ENCODE measurements at regions of chr2 and their contacts with region 1.

Region 1: GRCh38 chr2:119366649-119367471 is at the starts of genes C2orf76 and DBI:
- DNase-seq: peak; percentile 98
- H3K4me3 Mint-ChIP-seq: peak within 1 kb of the TSS; percentile 98
- H3K27ac Mint-ChIP-seq: peak within 1 kb of the TSS; percentile 97
- H3K4me1 Mint-ChIP-seq: peaks cover 35% of the 10 kb centered on the region
- H3K27me3 Mint-ChIP-seq: no peaks in the 10 kb centered on the region
- total RNA-seq, gene C2orf76: 10.2 and 11.5 TPM in 2 replicates
- total RNA-seq, gene DBI: 139 and 145 TPM in 2 replicates

Region 2: GRCh38 chr2:118013724-118014491 is 1353.0 kb before region 1 on chr2 and contains the start of gene CCDC93:
- intact Hi-C with region 1: loop called (anchors 5 kb)
- DNase-seq: peak; percentile 97
- H3K4me3 Mint-ChIP-seq: peak within 1 kb of the TSS; percentile 96
- H3K27ac Mint-ChIP-seq: peak within 1 kb of the TSS; percentile 91
- H3K4me1 Mint-ChIP-seq: peaks cover 41% of the 10 kb centered on the region
- H3K27me3 Mint-ChIP-seq: no peaks in the 10 kb centered on the region
- total RNA-seq, gene CCDC93: 30.3 and 34.4 TPM in 2 replicates

Region 3: GRCh38 chr2:118186110-118186857 is 1180.6 kb before region 1 on chr2:
- intact Hi-C with region 1: loop called (anchors 2 kb)
- DNase-seq: peak; percentile 95
- H3K4me3 Mint-ChIP-seq: peak overlapping the region; percentile 89
- H3K27ac Mint-ChIP-seq: peak overlapping the region; percentile 96
- H3K4me1 Mint-ChIP-seq: peaks cover 25% of the 10 kb centered on the region
- H3K27me3 Mint-ChIP-seq: no peaks in the 10 kb centered on the region

Region 4: GRCh38 chr2:118791483-118791882 is 575.4 kb before region 1 on chr2:
- intact Hi-C with region 1: no loop called
- DNase-seq: no peak
- H3K4me3 Mint-ChIP-seq: no peak overlapping the region
- H3K27ac Mint-ChIP-seq: no peak overlapping the region
- H3K4me1 Mint-ChIP-seq: no peaks in the 10 kb centered on the region
- H3K27me3 Mint-ChIP-seq: peaks cover 3% of the 10 kb centered on the region

Region 5: GRCh38 chr2:119678998-119679710 is 312.3 kb after region 1 on chr2 and contains the start of gene TMEM177:
- intact Hi-C with region 1: loop called (anchors 5 kb)
- DNase-seq: peak; percentile 98
- H3K4me3 Mint-ChIP-seq: peak within 1 kb of the TSS; percentile 87
- H3K27ac Mint-ChIP-seq: peak within 1 kb of the TSS; percentile 76
- H3K4me1 Mint-ChIP-seq: peaks cover 31% of the 10 kb centered on the region
- H3K27me3 Mint-ChIP-seq: peaks cover 12% of the 10 kb centered on the region
- total RNA-seq, gene TMEM177: 19.0 and 20.6 TPM in 2 replicates

Region 6: DNA sequence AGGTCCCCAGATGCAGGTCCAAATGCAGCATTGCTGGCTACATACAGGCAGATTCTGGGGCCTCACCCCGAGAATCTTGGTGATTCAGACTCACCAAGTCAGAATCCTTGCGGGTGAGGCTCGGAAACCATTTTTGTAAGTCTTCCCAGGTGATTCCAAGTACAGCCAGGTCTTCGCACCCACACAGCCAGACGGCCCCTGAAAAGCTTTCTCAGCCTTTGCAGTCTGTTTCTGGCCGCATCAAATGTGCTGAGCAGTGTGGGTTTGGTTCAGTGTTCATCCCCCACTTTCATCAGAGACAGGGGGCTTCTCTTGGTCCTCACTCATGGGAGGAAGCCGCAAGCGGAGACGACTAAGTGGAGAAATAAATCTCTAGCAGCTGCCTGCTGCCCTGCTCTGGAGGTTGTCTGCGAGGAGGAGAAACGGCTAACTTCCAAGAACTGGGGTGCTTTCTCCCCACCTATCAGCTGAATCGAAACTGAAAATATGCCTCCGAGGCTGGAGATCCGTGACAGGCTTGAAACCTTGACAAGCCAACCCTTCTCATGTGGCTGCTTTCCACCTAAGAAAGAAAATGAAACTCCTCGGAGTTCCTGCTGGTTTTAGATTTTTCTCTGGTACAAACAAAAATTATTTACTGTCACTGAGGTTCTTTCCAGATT is 865.2 kb after region 1 on chr2:
- intact Hi-C with region 1: loop called (anchors 5 kb)
- DNase-seq: peak; percentile 95
- H3K4me3 Mint-ChIP-seq: peak overlapping the region; percentile 98
- H3K27ac Mint-ChIP-seq: peak overlapping the region; percentile 99
- H3K4me1 Mint-ChIP-seq: peaks cover 61% of the 10 kb centered on the region
- H3K27me3 Mint-ChIP-seq: no peaks in the 10 kb centered on the region

Measured in activated CD4-positive, alpha-beta T cell treated with anti-CD3 and anti-CD28 coated beads, Interleukin-2, amount 10 ng/mL, durations not matched to agents 24 days and 14 days (primary cell).